Testis (tissue), 5 donors: ENCODE measurements at regions of chr5 and their contacts with region 1.

Region 1: DNA sequence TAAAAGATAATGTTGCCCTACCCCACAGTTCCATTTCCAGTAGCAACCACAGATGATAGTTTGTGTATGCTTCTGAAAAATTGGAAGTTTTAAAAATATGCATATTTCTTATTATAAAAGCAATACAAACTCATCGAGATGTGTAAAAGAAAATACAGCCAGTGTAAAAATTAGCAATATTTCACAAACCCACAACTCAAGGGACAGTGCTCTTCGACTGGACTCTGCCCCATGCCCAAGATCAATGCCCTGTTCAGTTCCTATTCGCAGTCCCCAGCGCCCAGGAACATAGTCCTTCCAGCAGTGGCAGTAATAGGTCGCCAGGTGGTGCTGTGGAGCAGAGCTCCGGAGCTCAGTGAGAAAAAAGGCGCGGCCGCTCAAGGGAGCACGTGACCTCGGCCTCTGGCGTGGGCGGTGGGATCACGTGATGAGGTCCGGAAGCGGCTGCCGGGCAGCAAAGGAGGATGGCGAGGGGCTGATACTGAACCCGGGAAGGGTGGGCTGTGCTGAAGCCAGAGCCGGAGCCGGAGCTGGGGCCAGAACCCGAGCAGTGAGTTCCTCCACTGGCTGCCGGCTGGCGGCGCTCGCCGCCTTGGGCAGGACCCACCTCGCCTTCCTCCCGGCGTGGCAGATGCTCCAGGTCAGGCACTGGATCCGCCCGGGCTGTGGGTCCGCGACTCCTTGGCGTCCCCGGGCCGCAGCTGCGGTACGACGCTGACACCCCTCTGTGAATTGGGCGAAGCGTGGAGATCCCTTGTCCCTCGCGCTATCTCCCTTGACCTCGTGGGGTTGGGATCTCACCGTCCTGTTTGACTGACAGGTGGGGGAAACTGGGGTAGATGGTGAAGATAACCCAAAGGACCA is at the start of gene SLC36A1:
- DNase-seq: peak; percentile 97
- H3K4me3 ChIP-seq: peak within 1 kb of the TSS; percentile 73 to 90
- H3K27ac ChIP-seq: peak within 1 kb of the TSS; percentile 69 to 82
- H3K4me1 ChIP-seq: peaks cover 42% of the 10 kb centered on the region
- H3K27me3 ChIP-seq: no peaks in the 10 kb centered on the region
- CTCF ChIP-seq: peak; percentile 97 to 99 (median 99)
- POLR2A ChIP-seq: no peak
- total RNA-seq, gene SLC36A1: 31.2 to 31.3 TPM

Region 2: GRCh38 chr5:151509231-151509630 is 61.8 kb after region 1 on chr5:
- intact Hi-C with region 1: loop called (anchors 10 kb)
- DNase-seq: no peak
- H3K4me3 ChIP-seq: no peak overlapping the region
- H3K27ac ChIP-seq: no peak overlapping the region
- H3K4me1 ChIP-seq: no peaks in the 10 kb centered on the region
- H3K27me3 ChIP-seq: no peaks in the 10 kb centered on the region
- CTCF ChIP-seq: no peak
- POLR2A ChIP-seq: no peak